CD8-positive, alpha-beta T cell (primary cell): ENCODE measurements at regions of chr12 and their contacts with region 1.

Region 1: GRCh38 chr12:124484526-124484953 is 82.9 kb downstream of the NCOR2 start:
- DNase-seq: no peak
- ATAC-seq: no peak
- H3K4me3 ChIP-seq: no peak overlapping the region
- H3K4me3 Mint-ChIP-seq: no peak overlapping the region
- H3K27ac ChIP-seq: no peak overlapping the region
- H3K27ac Mint-ChIP-seq: peak overlapping the region; percentile 60
- H3K4me1 ChIP-seq: peaks cover 4% of the 10 kb centered on the region
- H3K4me1 Mint-ChIP-seq: peaks cover 17% of the 10 kb centered on the region
- H3K27me3 ChIP-seq: no peaks in the 10 kb centered on the region
- H3K27me3 Mint-ChIP-seq: no peaks in the 10 kb centered on the region
- CTCF ChIP-seq: no peak

Region 2: GRCh38 chr12:124436366-124436765 is 48.2 kb before region 1 on chr12:
- CTCF ChIA-PET with region 1: no interaction called
- POLR2A ChIA-PET with region 1: no interaction called
- intact Hi-C with region 1: loop called in 1 of 2 experiments (anchors 1 kb)
- DNase-seq: no peak
- ATAC-seq: no peak
- H3K4me3 ChIP-seq: no peak overlapping the region
- H3K4me3 Mint-ChIP-seq: no peak overlapping the region
- H3K27ac ChIP-seq: no peak overlapping the region
- H3K27ac Mint-ChIP-seq: no peak overlapping the region
- H3K4me1 ChIP-seq: no peaks in the 10 kb centered on the region
- H3K4me1 Mint-ChIP-seq: peaks cover 8% of the 10 kb centered on the region
- H3K27me3 ChIP-seq: no peaks in the 10 kb centered on the region
- H3K27me3 Mint-ChIP-seq: no peaks in the 10 kb centered on the region
- CTCF ChIP-seq: no peak